Natural killer cell (primary cell): ENCODE measurements at regions of chr14 and their contacts with region 1.

Region 1: DNA sequence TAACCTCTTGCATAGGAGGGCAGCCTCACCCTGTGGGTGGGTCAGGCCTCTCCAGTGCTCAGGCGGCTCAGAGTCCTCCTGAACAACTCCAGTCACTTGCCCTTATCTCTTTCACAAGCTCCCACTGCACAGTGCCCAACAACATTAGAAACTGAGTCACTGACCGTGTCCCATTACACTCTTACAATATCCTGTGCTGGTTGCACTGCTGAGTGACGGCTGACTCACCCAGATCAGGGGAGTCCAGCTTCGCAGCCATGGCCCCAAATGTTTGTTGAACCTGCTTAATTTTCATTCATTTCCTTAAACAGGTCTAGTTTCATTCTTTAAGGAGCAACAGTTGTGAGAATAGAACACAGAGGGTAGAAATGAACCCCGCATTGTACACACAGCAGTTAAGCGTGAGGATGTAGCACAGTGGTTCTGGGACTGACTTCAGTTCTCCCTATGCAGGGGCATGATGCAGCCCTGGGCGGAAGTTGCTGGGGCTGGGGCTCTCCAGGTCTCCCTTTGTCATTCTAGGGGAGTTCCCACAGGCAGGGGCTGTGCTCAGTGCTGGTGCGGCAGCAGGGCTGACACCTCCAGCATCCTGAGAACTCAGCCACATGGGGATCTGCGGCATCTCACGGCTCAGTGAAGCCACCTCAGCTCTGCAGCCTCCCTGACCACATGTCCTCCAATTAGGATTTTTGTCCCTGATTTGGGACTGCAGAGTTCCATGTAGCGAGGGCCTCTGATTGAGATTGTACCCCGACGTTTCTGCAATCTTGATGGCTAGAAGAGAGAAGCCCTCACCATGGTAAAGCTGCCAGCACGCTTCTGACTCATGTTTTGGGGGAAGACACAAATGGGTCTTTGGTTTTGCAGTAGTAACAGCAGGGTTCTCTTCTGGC is 16.1 kb downstream of the GPR68 start:
- DNase-seq: peak; percentile 79 to 94
- ATAC-seq: peak; percentile 68 to 88 (median 82)
- H3K4me3 ChIP-seq: no peak overlapping the region
- H3K4me3 Mint-ChIP-seq: peak overlapping the region; percentile 81
- H3K27ac ChIP-seq: peak overlapping the region; percentile 90
- H3K27ac Mint-ChIP-seq: peak overlapping the region; percentile 98 to 100
- H3K4me1 ChIP-seq: peaks cover 95% of the 10 kb centered on the region
- H3K4me1 Mint-ChIP-seq: peaks cover 79 to 89% of the 10 kb centered on the region in 2 donors
- H3K27me3 ChIP-seq: no peaks in the 10 kb centered on the region
- H3K27me3 Mint-ChIP-seq: no peaks in the 10 kb centered on the region
- CTCF ChIP-seq: no peak

Region 2: DNA sequence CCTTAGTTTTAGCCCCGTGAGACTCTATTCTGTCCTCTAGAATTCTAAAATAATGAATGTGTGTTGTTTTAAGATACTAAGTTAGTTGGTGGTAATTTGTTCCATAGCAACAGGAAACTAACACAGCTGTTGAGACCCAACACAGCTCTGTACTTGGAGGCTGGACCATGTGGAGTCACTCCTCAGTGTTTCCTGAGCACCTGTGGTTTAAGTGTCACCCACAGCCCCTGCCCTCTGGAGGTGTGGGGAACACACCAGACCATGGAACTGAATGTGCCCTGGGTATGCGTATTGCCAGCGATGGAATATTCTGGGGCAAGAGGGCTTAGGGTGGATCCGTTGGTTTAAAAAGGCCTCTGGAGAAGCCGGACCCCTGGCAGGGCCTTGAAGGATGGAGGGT is 32.8 kb after region 1 on chr14:
- intact Hi-C with region 1: loop called (anchors 2 kb)
- DNase-seq: peak; percentile 62 to 73
- ATAC-seq: peak; percentile 79 to 87 (median 84)
- H3K4me3 ChIP-seq: no peak overlapping the region
- H3K4me3 Mint-ChIP-seq: peak overlapping the region; percentile 43
- H3K27ac ChIP-seq: peak overlapping the region; percentile 82
- H3K27ac Mint-ChIP-seq: peak overlapping the region; percentile 73 to 88
- H3K4me1 ChIP-seq: peaks cover 46% of the 10 kb centered on the region
- H3K4me1 Mint-ChIP-seq: peaks cover 52 to 74% of the 10 kb centered on the region in 2 donors
- H3K27me3 ChIP-seq: no peaks in the 10 kb centered on the region
- H3K27me3 Mint-ChIP-seq: no peaks in the 10 kb centered on the region
- CTCF ChIP-seq: no peak

Region 3: GRCh38 chr14:91305650-91306431 is 77.5 kb after region 1 on chr14:
- intact Hi-C with region 1: no loop called
- DNase-seq: no peak
- ATAC-seq: no peak
- H3K4me3 ChIP-seq: no peak overlapping the region
- H3K4me3 Mint-ChIP-seq: no peak overlapping the region
- H3K27ac ChIP-seq: no peak overlapping the region
- H3K27ac Mint-ChIP-seq: peak overlapping the region; percentile 67 to 69
- H3K4me1 ChIP-seq: peaks cover 7% of the 10 kb centered on the region
- H3K4me1 Mint-ChIP-seq: peaks cover 26% of the 10 kb centered on the region in 2 donors
- H3K27me3 ChIP-seq: no peaks in the 10 kb centered on the region
- H3K27me3 Mint-ChIP-seq: no peaks in the 10 kb centered on the region
- CTCF ChIP-seq: no peak

Region 4: DNA sequence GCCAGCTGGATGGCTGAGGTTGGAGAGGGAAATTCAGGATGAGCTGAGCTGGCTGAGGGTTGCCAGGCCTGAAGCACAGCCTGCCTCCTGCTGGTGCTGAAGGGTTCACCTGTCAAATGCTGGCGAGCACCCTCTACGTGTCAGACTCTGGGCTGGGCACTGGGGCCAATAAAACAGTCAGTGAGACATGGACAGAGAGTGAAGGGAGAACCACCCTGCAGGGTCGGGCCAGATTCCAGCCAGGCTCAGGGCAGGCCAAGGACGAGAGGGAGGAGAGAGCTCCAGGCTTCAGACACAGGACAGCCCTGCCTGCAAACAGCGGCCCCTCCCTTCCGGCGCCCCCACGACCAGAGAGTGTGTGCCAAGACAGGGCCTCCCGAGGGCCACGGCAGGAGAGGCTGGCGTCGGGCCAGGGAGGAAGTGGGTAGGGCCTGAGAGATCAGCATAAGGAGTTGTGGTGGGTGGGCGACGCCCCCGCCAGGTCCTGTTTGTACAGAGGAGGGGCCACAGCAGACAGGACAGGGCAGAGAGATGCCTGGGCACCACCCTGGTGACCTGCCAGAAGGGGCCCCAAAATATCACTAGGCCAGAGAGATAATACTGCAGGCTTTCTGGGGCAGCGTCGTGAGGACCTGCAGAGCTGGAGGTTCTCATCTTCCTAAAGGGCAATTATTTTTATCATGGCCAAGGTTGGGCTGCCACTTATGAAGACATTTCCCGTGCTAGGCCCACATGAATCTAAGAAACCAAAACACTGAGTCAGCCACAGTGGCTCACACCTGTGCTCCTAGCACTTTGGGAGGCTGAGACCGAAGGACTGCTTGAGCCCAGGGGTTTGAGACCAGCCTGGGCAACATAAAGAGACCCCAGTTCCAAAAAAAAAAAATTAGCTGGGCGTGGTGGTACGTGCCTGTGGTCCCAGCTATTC is 89.3 kb after region 1 on chr14:
- intact Hi-C with region 1: loop called (anchors 1 kb)
- DNase-seq: peak; percentile 55 to 85
- ATAC-seq: peak; percentile 27 to 57 (median 35)
- H3K4me3 ChIP-seq: no peak overlapping the region
- H3K4me3 Mint-ChIP-seq: peak overlapping the region; percentile 84
- H3K27ac ChIP-seq: peak overlapping the region; percentile 96
- H3K27ac Mint-ChIP-seq: peak overlapping the region; percentile 98
- H3K4me1 ChIP-seq: peaks cover 55% of the 10 kb centered on the region
- H3K4me1 Mint-ChIP-seq: peaks cover 54 to 57% of the 10 kb centered on the region in 2 donors
- H3K27me3 ChIP-seq: no peaks in the 10 kb centered on the region
- H3K27me3 Mint-ChIP-seq: no peaks in the 10 kb centered on the region
- CTCF ChIP-seq: no peak

Region 5: DNA sequence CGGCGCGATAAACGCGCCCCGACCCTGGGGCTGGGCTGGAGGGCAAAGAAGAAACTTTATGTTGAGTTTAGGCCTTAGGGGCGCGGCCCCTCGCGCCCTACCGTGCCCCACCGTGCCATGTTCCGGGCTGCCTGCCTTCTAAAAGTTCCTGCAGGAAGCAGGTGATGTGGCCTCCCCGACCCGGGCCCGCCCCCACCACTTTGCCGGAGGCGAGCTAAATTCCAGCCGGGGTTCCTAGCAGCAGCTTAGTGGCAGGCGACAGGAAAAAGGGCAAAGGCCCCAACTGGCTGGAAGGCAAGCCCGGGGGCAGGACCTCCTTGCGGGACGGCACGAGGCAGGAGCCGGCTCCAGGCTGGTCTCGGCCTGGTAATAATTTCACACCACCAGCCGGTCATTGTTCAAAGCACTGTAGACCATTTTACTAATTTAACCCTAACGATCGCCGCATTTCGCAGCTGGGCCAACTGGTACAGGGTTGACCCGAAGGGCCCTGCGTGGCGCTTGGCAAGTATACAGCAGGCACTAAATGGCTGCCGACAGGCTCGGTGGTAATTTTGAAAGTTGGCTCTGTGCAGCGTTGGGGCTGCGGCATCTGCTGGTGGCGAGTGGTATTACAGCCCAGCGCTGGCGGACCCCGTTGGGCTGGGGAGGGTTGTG is 190.2 kb after region 1 on chr14:
- intact Hi-C with region 1: loop called (anchors 5 kb)
- DNase-seq: peak; percentile 81 to 92
- ATAC-seq: peak; percentile 32 to 61 (median 36)
- H3K4me3 ChIP-seq: peak overlapping the region; percentile 27
- H3K4me3 Mint-ChIP-seq: peak overlapping the region; percentile 55
- H3K27ac ChIP-seq: peak overlapping the region; percentile 70
- H3K27ac Mint-ChIP-seq: peak overlapping the region; percentile 80 to 99
- H3K4me1 ChIP-seq: peaks cover 37% of the 10 kb centered on the region
- H3K4me1 Mint-ChIP-seq: peaks cover 39 to 45% of the 10 kb centered on the region in 2 donors
- H3K27me3 ChIP-seq: no peaks in the 10 kb centered on the region
- H3K27me3 Mint-ChIP-seq: no peaks in the 10 kb centered on the region
- CTCF ChIP-seq: peak; percentile 98